Endothelial cell of umbilical vein (primary cell): ENCODE measurements at regions of chr2 and their contacts with region 1.

Region 1: DNA sequence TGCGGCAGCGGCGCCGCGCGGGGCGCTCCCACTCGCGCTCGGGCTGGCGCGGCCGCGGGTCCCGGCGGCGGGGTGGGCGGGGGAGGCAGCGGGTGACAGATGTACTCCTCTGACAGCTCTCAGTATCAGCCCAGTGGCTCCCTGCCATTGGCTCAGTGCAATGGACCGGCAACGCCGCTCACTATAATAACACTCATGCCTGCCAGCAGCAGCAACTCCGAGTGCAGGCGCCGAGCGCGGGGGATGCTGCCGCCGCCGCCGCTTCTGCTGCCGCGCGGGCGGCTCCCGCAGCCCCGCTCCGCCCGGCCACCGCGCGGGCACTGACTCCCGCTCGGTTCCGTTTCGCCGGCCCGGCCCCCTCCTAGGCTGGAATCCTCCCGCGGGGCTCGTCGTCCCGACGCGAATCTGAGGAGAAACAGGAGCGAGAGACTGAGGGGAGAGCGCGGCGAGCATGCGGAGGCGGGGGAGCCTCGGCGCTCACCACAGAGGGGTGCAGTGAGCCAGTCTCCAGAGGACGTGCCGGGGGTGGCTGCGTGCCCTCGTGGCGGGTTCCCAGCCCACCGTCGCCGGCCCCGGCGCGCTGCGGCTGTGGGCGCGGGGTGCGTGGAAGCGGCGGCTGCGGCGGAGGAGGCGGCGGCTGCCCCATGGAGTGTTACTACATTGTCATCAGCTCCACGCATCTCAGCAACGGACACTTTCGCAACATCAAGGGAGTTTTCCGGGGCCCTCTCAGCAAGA is at the start of gene ZNF804A:
- DNase-seq: peak; percentile 61
- H3K4me3 ChIP-seq: peak within 1 kb of the TSS; percentile 58 to 75 (median 73)
- H3K27ac ChIP-seq: peak within 1 kb of the TSS; percentile 44
- H3K4me1 ChIP-seq: peaks cover 12% of the 10 kb centered on the region
- H3K27me3 ChIP-seq: peaks cover 12 to 34% of the 10 kb centered on the region in 2 experiments
- CTCF ChIP-seq: no peak
- POLR2A ChIP-seq: no peak
- total RNA-seq, gene ZNF804A: 0.90 TPM in 1 of 2 replicates, not detected in the other

Region 2: GRCh38 chr2:184339966-184340365 is 258.5 kb before region 1 on chr2:
- CTCF ChIA-PET with region 1: no interaction called
- POLR2A ChIA-PET with region 1: no interaction called
- dilution Hi-C with region 1: no loop called
- intact Hi-C with region 1: loop called (anchors 10 kb)
- DNase-seq: peak; percentile 62
- H3K4me3 ChIP-seq: no peak overlapping the region
- H3K27ac ChIP-seq: no peak overlapping the region
- H3K4me1 ChIP-seq: peaks cover 11% of the 10 kb centered on the region
- H3K27me3 ChIP-seq: no peaks in the 10 kb centered on the region
- CTCF ChIP-seq: no peak
- POLR2A ChIP-seq: no peak

Region 3: GRCh38 chr2:184581391-184581790 is 17.1 kb before region 1 on chr2:
- CTCF ChIA-PET with region 1: interaction called, 12 read pairs
- POLR2A ChIA-PET with region 1: no interaction called
- dilution Hi-C with region 1: no loop called
- intact Hi-C with region 1: no loop called
- DNase-seq: no peak
- H3K4me3 ChIP-seq: no peak overlapping the region
- H3K27ac ChIP-seq: no peak overlapping the region
- H3K4me1 ChIP-seq: no peaks in the 10 kb centered on the region
- H3K27me3 ChIP-seq: no peaks in the 10 kb centered on the region
- CTCF ChIP-seq: no peak
- POLR2A ChIP-seq: no peak

Region 4: GRCh38 chr2:184633726-184634125 is 35.2 kb after region 1 on chr2:
- CTCF ChIA-PET with region 1: interaction called, 5 read pairs
- POLR2A ChIA-PET with region 1: no interaction called
- dilution Hi-C with region 1: no loop called
- intact Hi-C with region 1: loop called (anchors 1 kb)
- DNase-seq: no peak
- H3K4me3 ChIP-seq: no peak overlapping the region
- H3K27ac ChIP-seq: no peak overlapping the region
- H3K4me1 ChIP-seq: peaks cover 8% of the 10 kb centered on the region
- H3K27me3 ChIP-seq: no peaks in the 10 kb centered on the region
- CTCF ChIP-seq: no peak
- POLR2A ChIP-seq: no peak